Right ventricle myocardium superior (tissue), 1 donor: ENCODE measurements at regions of chr9 and their contacts with region 1.

Region 1: DNA sequence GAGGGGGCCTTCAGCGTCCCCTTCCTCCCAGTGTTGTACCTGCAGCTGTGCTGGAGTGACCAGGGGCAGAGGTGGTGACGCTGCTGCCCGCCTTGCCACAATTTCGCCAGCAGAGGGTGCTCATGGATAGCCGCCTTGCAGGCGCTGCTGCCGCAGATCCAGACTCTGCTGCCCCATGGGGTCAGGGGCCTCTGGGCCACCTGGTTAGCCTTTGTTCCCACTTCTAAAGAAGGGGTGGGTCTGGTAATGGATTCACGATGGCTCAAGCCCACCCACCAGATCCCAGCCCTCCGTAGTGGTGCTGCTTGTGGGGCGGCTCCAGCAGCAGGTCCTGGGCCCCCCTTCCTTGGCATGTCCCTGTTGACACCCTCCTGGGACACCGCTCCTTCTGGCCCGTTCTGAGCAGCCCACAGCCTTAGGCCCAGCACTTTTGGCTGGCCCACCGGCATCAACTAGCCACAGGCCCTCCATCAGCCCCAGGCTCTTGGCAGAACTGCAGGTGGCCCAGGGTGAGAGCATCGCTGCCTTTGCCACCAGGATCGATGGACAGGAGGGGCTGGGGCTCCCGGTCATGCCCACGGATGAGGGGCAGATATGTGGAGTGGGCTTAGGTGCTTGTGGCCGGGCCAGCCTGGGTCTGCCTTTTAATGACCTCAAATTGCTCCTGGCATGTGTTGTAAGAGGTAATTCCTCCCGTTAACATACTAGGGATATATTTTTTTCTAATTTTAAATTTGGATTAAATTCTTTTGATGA is 57.2 kb downstream of the COL5A1 start:
- DNase-seq: peak; percentile 78
- ATAC-seq: peak; percentile 90

Region 2: GRCh38 chr9:133981958-133982681 is 716.6 kb before region 1 on chr9:
- intact Hi-C with region 1: no loop called
- DNase-seq: no peak
- ATAC-seq: no peak

Region 3: DNA sequence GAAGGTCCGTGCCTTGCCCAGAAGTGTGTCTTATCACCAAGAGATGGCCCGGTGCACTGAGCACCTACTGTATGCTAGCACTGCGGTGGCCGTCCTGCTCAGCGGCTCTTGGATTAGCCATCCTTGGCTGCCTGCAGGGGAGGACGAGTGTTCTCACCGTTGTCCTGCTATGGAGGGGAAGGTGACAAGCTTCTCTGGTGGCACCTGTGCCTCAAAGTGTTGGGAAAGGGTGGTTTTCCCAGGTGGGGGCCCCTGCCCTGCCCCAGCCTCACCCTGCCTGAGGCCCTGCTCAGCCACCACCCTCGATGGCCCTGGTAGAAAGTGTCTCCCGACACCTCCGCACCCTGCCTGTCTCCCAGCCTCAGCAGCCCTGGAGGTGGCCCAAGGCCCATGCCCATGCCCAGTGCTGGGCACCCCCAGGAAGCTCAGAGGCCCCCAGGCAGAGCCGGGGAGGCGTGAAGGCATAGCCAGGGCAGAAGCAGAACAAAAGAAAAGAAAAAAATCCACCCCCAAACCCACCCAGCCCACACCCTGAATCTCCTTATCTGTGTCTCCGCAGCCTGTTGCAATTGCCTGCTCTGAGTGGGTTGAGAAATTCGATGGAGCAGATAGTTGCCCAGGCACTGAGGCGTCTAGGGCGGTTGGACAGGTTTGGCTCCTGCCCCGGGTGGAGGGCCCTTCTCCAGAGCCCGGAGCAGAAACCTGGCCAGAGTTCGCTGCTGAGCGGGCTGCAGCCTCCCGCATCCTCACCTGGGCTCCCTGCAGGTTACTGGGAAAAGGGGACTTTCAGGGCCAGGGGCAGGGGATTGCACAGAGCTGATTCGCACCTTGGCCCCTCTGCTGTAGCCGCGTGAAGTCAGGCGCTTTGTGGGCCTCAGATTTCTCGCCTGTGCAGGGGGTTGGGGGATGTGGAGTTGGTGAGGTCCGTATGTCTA is 341.9 kb before region 1 on chr9:
- intact Hi-C with region 1: no loop called
- DNase-seq: no peak
- ATAC-seq: peak; percentile 16

Region 4: GRCh38 chr9:134734270-134734669 is 35.5 kb after region 1 on chr9:
- intact Hi-C with region 1: loop called (anchors 5 kb)
- DNase-seq: peak; percentile 65
- ATAC-seq: peak; percentile 14

Region 5: DNA sequence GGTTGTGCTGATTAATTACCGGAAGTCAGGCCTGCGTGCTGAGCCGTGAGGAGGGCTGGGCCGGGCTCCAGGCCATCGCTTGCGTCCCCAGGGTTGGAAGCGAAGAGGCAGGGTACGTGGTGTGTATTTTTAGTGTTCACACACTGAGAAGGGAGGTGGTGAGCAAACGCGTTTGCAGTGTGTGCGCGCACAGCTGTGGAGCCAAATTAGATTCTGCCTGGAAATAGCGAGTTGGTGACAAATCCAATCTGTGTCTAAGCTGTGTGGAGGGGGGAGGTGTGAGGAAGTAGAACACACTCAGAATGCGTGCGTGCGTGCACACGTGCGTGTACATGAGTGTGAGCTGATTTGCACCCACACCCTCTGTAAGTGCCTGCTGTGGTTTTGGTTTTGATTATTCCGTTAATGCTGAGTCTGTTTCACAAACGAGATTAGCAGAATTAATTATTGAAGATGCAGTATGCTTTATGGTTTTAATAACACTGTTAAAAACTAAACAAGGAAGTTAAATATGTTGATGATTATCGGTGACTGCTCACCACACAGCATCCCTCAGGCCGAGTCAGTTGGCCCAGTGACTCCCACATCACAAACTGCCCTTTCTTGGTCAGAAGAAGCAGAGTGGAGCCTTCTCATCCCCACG is 70.1 kb after region 1 on chr9:
- intact Hi-C with region 1: no loop called
- DNase-seq: peak; percentile 73
- ATAC-seq: peak; percentile 52

Region 6: GRCh38 chr9:134983074-134983473 is 284.3 kb after region 1 on chr9:
- intact Hi-C with region 1: loop called (anchors 2 kb)
- DNase-seq: peak; percentile 83
- ATAC-seq: peak; percentile 80